Ovary (tissue), 10 donors: ENCODE measurements at regions of chr16 and their contacts with region 1.

Region 1: GRCh38 chr16:84754353-84754856 is 54.6 kb downstream of the USP10 start:
- DNase-seq: peak in 2 of 5 donors; percentile 50 to 78
- H3K4me3 ChIP-seq: no peak overlapping the region
- H3K27ac ChIP-seq: no peak overlapping the region
- H3K4me1 ChIP-seq: peaks cover 23% of the 10 kb centered on the region
- H3K27me3 ChIP-seq: no peaks in the 10 kb centered on the region
- CTCF ChIP-seq: peak; percentile 48 to 94 (median 86)
- EP300 ChIP-seq: no peak
- POLR2A ChIP-seq: no peak

Region 2: DNA sequence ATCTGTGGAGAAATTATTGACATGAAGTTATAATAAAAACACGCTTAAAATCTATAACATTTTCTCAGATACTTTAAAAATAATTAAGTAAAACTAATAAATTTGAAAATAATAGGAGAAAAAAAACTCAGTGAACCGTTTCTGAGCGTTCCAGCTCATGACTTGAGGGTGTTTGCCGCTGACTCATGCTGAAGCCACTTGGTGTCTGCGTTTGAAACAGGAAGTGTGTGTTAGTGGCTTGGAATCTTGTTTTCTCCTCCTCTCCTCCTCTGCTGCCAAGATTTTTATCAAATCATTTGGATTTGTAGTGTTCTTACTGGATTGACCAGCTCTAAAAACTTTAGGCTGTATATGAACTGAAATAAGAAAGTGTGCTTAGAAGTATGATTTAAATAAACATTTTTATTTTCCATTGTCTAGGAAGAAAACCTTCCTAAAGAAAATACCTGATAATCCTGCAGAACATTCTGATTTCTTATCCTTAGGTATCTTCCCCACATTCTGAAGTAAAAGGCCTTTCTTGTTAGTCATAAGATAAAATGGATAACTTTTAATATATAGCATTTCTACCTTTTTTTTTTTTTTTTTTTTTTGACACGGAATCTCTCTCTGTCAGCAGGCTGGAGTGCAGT is 23.9 kb before region 1 on chr16:
- intact Hi-C with region 1: no loop called
- DNase-seq: peak in 2 of 5 donors; percentile 35 to 52
- H3K4me3 ChIP-seq: no peak overlapping the region
- H3K27ac ChIP-seq: no peak overlapping the region
- H3K4me1 ChIP-seq: peaks cover 5% of the 10 kb centered on the region
- H3K27me3 ChIP-seq: no peaks in the 10 kb centered on the region
- CTCF ChIP-seq: no peak
- EP300 ChIP-seq: no peak
- POLR2A ChIP-seq: no peak

Region 3: GRCh38 chr16:84952335-84953189 is 198.2 kb after region 1 on chr16:
- intact Hi-C with region 1: loop called in 2 of 4 experiments (anchors 5 kb)
- DNase-seq: peak; percentile 75 to 86 (median 81)
- H3K4me3 ChIP-seq: no peak overlapping the region
- H3K27ac ChIP-seq: peak overlapping the region in 1 of 2 donors; percentile 37
- H3K4me1 ChIP-seq: peaks cover 8% of the 10 kb centered on the region
- H3K27me3 ChIP-seq: no peaks in the 10 kb centered on the region
- CTCF ChIP-seq: peak; percentile 86 to 91 (median 87)
- EP300 ChIP-seq: no peak
- POLR2A ChIP-seq: no peak

Region 4: GRCh38 chr16:84970447-84971127 is 216.2 kb after region 1 on chr16:
- intact Hi-C with region 1: loop called (anchors 1 to 2 kb)
- DNase-seq: peak; percentile 75 to 88 (median 85)
- H3K4me3 ChIP-seq: no peak overlapping the region
- H3K27ac ChIP-seq: no peak overlapping the region
- H3K4me1 ChIP-seq: no peaks in the 10 kb centered on the region
- H3K27me3 ChIP-seq: no peaks in the 10 kb centered on the region
- CTCF ChIP-seq: peak; percentile 73 to 96 (median 96)
- EP300 ChIP-seq: no peak
- POLR2A ChIP-seq: no peak